GM12878 (cell line): ENCODE measurements at regions of chr11 and their contacts with region 1.

Region 1: GRCh38 chr11:116835791-116836631 is 1.4 kb downstream of the APOA1 start:
- DNase-seq: peak; percentile 57
- ATAC-seq: peak; percentile 94
- H3K4me3 ChIP-seq: peak overlapping the region; percentile 52; the same call in 1 of the 2 replicates
- H3K27ac ChIP-seq: peak overlapping the region; percentile 20; the same call in 1 of the 2 replicates
- H3K4me1 ChIP-seq: peaks cover 8% of the 10 kb centered on the region; the same call in 1 of the 2 replicates
- H3K27me3 ChIP-seq: no peaks in the 10 kb centered on the region
- CTCF ChIP-seq: peak; percentile 68 to 81 (median 75)
- EP300 ChIP-seq: no peak
- POLR2A ChIP-seq: peak; percentile 83
- RAD21 ChIP-seq: peak; percentile 60

Region 2: DNA sequence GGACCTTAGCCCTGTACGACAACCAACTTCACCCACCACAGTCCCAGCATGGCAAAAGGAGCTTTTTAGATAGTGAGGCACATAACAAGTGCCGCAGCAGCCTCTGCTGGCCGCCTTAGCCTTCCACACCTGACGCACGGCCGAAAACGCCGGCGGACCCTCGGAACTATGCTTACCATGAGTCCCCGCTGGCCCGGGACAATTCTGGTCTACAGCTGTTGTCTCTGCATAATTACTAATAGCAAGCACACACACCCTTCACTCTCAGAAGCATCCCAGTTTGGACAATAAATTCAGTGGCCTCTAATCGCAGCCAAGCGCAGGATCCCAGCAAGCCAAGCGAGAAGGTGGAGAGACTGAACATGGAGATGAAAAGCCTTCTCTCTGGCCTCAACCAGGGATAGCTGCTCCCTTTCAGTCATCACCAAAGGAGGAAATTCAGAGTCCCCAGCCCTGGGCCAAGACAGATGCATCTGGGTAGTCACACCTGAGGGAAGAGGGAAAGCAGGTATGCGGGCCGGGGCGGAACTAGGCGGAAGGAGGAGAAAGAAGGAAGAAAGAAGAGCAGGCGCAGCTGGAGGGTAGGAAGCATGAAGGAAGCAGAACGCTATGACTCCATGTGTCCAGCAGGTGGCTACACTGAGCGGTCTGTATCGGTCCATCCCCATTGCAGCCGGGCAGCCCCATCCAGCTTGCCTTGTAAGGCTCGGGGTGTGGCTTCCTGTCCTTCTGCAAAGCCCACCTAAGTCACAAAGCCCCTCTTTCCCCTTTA is 103.6 kb before region 1 on chr11:
- CTCF ChIA-PET with region 1: interaction called, 57 read pairs
- POLR2A ChIA-PET with region 1: no interaction called
- RAD21 ChIA-PET with region 1: interaction called, 19 read pairs
- SMC1A ChIA-PET with region 1: interaction called, 16 read pairs
- in situ Hi-C with region 1: no loop called
- intact Hi-C with region 1: loop called (anchors 1 kb)
- DNase-seq: peak; percentile 20
- ATAC-seq: peak; percentile 95
- H3K4me3 ChIP-seq: no peak overlapping the region
- H3K27ac ChIP-seq: no peak overlapping the region
- H3K4me1 ChIP-seq: peaks cover 16% of the 10 kb centered on the region
- H3K27me3 ChIP-seq: no peaks in the 10 kb centered on the region; a peak in 1 of 4 replicates
- CTCF ChIP-seq: peak; percentile 87 to 91 (median 89)
- EP300 ChIP-seq: no peak
- POLR2A ChIP-seq: no peak
- RAD21 ChIP-seq: peak; percentile 55

Region 3: DNA sequence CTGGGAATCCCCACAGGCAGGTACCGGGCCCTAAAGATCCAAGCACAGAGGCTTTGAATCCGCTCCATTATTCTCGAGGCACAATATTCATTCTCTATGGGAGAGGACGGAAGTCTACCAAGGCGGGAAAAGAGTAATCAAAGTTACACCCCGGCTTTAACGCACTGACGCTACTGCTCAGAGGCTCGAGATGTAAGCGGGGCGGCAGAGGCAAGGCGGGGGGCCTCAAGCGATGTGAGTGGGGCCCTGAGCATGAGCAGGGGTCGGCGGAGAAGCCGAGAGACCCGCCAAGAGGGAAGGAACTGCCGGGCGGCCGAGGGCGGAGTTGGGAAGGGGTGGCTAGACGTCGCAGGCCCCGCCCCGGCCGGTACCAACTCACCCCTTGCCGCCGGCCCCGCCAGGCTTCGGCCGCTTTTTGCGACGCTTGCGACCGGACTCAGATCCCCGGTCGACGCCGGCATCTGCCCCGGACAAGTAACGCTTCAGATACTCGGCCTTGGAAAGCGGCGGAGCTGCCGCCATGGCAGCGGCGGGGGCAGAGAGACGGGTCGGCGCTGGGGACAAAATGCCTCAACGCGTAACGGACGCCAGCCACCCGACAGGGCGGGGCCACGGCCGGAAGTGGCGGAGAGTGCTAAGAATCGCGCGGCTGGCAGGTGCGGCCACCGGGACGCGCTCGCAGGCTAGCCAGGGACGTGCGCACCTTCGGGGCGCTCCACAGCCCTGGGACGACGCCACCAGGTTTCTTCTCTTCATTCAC is 63.4 kb before region 1 on chr11 and contains the start of gene BUD13:
- CTCF ChIA-PET with region 1: interaction called, 18 read pairs
- POLR2A ChIA-PET with region 1: no interaction called
- RAD21 ChIA-PET with region 1: interaction called, 5 read pairs
- SMC1A ChIA-PET with region 1: interaction called, 4 read pairs
- in situ Hi-C with region 1: no loop called
- intact Hi-C with region 1: no loop called
- DNase-seq: peak; percentile 60
- ATAC-seq: peak; percentile 92
- H3K4me3 ChIP-seq: peak within 1 kb of the TSS; percentile 82
- H3K27ac ChIP-seq: peak within 1 kb of the TSS; percentile 80
- H3K4me1 ChIP-seq: peaks cover 3% of the 10 kb centered on the region; the same call in 1 of the 2 replicates
- H3K27me3 ChIP-seq: no peaks in the 10 kb centered on the region
- CTCF ChIP-seq: no peak; a peak in 1 of 6 replicates
- EP300 ChIP-seq: no peak
- POLR2A ChIP-seq: peak; percentile 92
- RAD21 ChIP-seq: no peak
- polyA plus RNA-seq, gene BUD13: 10.9 to 15.8 TPM

Region 4: GRCh38 chr11:116792869-116793771 is 42.9 kb before region 1 on chr11:
- CTCF ChIA-PET with region 1: interaction called, 183 read pairs
- POLR2A ChIA-PET with region 1: interaction called, 9 read pairs
- RAD21 ChIA-PET with region 1: interaction called, 56 read pairs
- SMC1A ChIA-PET with region 1: interaction called, 42 read pairs
- in situ Hi-C with region 1: no loop called
- intact Hi-C with region 1: loop called (anchors 1 kb)
- DNase-seq: no peak
- ATAC-seq: no peak
- H3K4me3 ChIP-seq: no peak overlapping the region
- H3K27ac ChIP-seq: no peak overlapping the region
- H3K4me1 ChIP-seq: peaks cover 9% of the 10 kb centered on the region
- H3K27me3 ChIP-seq: no peaks in the 10 kb centered on the region
- CTCF ChIP-seq: no peak
- EP300 ChIP-seq: no peak
- POLR2A ChIP-seq: no peak
- RAD21 ChIP-seq: no peak

Region 5: GRCh38 chr11:116821050-116821918 is 14.7 kb before region 1 on chr11:
- CTCF ChIA-PET with region 1: interaction called, 17 read pairs
- POLR2A ChIA-PET with region 1: no interaction called
- RAD21 ChIA-PET with region 1: interaction called, 5 read pairs
- SMC1A ChIA-PET with region 1: no interaction called
- in situ Hi-C with region 1: no loop called
- intact Hi-C with region 1: no loop called
- DNase-seq: no peak
- ATAC-seq: no peak
- H3K4me3 ChIP-seq: no peak overlapping the region
- H3K27ac ChIP-seq: no peak overlapping the region
- H3K4me1 ChIP-seq: no peaks in the 10 kb centered on the region
- H3K27me3 ChIP-seq: no peaks in the 10 kb centered on the region
- CTCF ChIP-seq: no peak
- EP300 ChIP-seq: no peak
- POLR2A ChIP-seq: no peak
- RAD21 ChIP-seq: no peak